Keratinocyte (primary cell): ENCODE measurements at regions of chr17 and their contacts with region 1.

Region 1: DNA sequence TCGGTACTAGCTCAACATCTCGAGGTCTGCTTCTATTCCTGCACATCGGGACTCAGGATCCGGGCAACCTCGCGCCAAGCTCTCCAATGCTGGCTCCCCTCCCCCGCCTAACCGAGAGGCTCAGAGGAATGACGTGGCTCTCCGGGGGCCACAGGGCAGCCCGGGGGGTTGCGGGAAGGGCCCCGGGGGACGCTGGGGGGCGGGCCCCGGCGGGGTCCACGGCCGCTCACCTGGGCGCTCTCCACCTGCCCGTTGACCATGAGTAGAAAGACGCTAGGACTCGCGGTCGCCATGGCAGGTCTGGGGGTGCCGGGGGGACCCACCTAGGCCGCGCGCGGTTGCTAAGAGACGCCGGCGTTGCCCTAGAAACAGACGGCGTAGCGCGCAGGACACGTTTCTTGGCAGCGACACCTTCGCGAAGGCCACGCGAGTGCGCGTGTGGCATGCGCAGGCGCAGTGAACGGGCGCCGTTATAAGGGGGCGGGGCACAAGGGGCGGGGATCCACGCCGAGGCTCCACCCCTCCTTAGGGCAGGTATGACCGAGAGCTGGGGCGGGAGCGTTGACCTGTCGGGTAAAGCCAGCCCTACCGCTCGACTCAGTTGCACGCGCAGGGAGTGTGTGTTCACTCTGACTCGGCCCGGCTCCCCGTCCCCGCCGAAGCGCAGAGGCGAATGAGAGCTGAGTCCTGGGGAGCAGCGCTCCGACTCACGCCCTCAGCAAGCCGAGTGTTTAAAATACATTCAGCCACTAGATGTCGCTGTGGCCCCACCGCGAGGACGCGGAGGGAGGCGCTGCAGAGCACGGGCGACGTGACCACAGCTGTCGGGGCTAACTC is at the start of gene B9D1:
- DNase-seq: peak; percentile 68
- H3K4me3 ChIP-seq: peak within 1 kb of the TSS; percentile 68 to 90 (median 85)
- H3K27ac ChIP-seq: peak within 1 kb of the TSS; percentile 79
- H3K4me1 ChIP-seq: peaks cover 12% of the 10 kb centered on the region
- H3K27me3 ChIP-seq: no peaks in the 10 kb centered on the region
- CTCF ChIP-seq: peak; percentile 88 to 99 (median 98)
- polyA plus RNA-seq, gene B9D1: 27.1 to 31.7 TPM (median 30.3 TPM) in 3 replicates

Region 2: DNA sequence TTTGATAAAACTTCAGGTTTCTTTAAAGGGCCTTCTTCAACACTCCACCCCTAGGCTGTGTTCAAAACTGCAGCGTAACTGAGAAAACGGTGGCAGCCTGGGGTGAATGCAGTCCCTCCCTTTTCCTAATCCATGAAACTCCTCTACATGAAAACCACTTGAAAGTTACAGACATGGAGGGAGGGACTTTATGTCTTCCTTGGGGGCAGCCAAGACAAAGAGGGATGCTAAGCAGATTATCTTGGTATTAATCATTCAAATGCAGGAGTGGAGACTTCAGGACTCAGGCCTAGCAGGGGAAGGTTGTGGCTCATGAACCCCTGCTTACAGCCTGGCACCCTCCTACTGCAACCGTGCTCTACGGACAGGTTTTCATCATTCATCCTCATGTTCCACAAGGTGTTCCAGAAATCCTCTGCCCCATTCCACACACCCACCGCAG is 95.4 kb after region 1 on chr17:
- dilution Hi-C with region 1: loop called (anchors 5 kb)
- DNase-seq: no peak
- H3K4me3 ChIP-seq: no peak overlapping the region
- H3K27ac ChIP-seq: no peak overlapping the region
- H3K4me1 ChIP-seq: no peaks in the 10 kb centered on the region
- H3K27me3 ChIP-seq: peaks cover 7% of the 10 kb centered on the region
- CTCF ChIP-seq: no peak

Region 3: GRCh38 chr17:19672009-19672750 is 309.7 kb after region 1 on chr17:
- dilution Hi-C with region 1: loop called (anchors 25 kb)
- DNase-seq: no peak
- H3K4me3 ChIP-seq: no peak overlapping the region
- H3K27ac ChIP-seq: no peak overlapping the region
- H3K4me1 ChIP-seq: no peaks in the 10 kb centered on the region
- H3K27me3 ChIP-seq: no peaks in the 10 kb centered on the region
- CTCF ChIP-seq: no peak